CD8-positive, alpha-beta T cell (primary cell): ENCODE measurements at regions of chr10 and their contacts with region 1.

Region 1: GRCh38 chr10:62050893-62051433 is 149.5 kb downstream of the ARID5B start:
- DNase-seq: peak; percentile 32 to 87 (median 57)
- ATAC-seq: peak; percentile 74
- H3K4me3 ChIP-seq: peak overlapping the region in 1 of 2 experiments; percentile 36
- H3K4me3 Mint-ChIP-seq: peak overlapping the region; percentile 74
- H3K27ac ChIP-seq: peak overlapping the region; percentile 14 to 73
- H3K27ac Mint-ChIP-seq: peak overlapping the region; percentile 86
- H3K4me1 ChIP-seq: peaks cover 38% of the 10 kb centered on the region
- H3K4me1 Mint-ChIP-seq: peaks cover 78% of the 10 kb centered on the region
- H3K27me3 ChIP-seq: no peaks in the 10 kb centered on the region
- H3K27me3 Mint-ChIP-seq: no peaks in the 10 kb centered on the region
- CTCF ChIP-seq: no peak

Region 2: GRCh38 chr10:62082729-62083411 is 31.9 kb after region 1 on chr10:
- CTCF ChIA-PET with region 1: no interaction called
- POLR2A ChIA-PET with region 1: interaction called, 4 read pairs
- intact Hi-C with region 1: loop called in 1 of 2 experiments (anchors 1 kb)
- DNase-seq: peak in 8 of 9 experiments; percentile 9 to 68 (median 36)
- ATAC-seq: peak; percentile 86
- H3K4me3 ChIP-seq: no peak overlapping the region
- H3K4me3 Mint-ChIP-seq: peak overlapping the region; percentile 46
- H3K27ac ChIP-seq: peak overlapping the region in 1 of 2 experiments; percentile 68
- H3K27ac Mint-ChIP-seq: peak overlapping the region; percentile 55
- H3K4me1 ChIP-seq: peaks cover 19% of the 10 kb centered on the region
- H3K4me1 Mint-ChIP-seq: peaks cover 43% of the 10 kb centered on the region
- H3K27me3 ChIP-seq: no peaks in the 10 kb centered on the region
- H3K27me3 Mint-ChIP-seq: no peaks in the 10 kb centered on the region
- CTCF ChIP-seq: no peak

Region 3: GRCh38 chr10:62384057-62384446 is 333.1 kb after region 1 on chr10:
- CTCF ChIA-PET with region 1: no interaction called
- POLR2A ChIA-PET with region 1: no interaction called
- intact Hi-C with region 1: loop called in 1 of 2 experiments (anchors 5 kb)
- DNase-seq: peak; percentile 13 to 89 (median 52)
- ATAC-seq: peak; percentile 96
- H3K4me3 ChIP-seq: peak overlapping the region in 1 of 2 experiments; percentile 6
- H3K4me3 Mint-ChIP-seq: no peak overlapping the region
- H3K27ac ChIP-seq: peak overlapping the region in 1 of 2 experiments; percentile 54
- H3K27ac Mint-ChIP-seq: no peak overlapping the region
- H3K4me1 ChIP-seq: peaks cover 15% of the 10 kb centered on the region
- H3K4me1 Mint-ChIP-seq: peaks cover 15% of the 10 kb centered on the region
- H3K27me3 ChIP-seq: no peaks in the 10 kb centered on the region
- H3K27me3 Mint-ChIP-seq: peaks cover 2% of the 10 kb centered on the region
- CTCF ChIP-seq: no peak